ENCODE measurements at regions of chr16 and their contacts with region 1.

Region 1: GRCh38 chr16:48632137-48632774 is 22.3 kb upstream of the N4BP1 start:
- DNase-seq: no peak
- H3K4me3 Mint-ChIP-seq: no peak overlapping the region
- H3K27ac Mint-ChIP-seq: no peak overlapping the region
- H3K4me1 Mint-ChIP-seq: peaks cover 10% of the 10 kb centered on the region
- H3K27me3 Mint-ChIP-seq: peaks cover 2% of the 10 kb centered on the region

Region 2: DNA sequence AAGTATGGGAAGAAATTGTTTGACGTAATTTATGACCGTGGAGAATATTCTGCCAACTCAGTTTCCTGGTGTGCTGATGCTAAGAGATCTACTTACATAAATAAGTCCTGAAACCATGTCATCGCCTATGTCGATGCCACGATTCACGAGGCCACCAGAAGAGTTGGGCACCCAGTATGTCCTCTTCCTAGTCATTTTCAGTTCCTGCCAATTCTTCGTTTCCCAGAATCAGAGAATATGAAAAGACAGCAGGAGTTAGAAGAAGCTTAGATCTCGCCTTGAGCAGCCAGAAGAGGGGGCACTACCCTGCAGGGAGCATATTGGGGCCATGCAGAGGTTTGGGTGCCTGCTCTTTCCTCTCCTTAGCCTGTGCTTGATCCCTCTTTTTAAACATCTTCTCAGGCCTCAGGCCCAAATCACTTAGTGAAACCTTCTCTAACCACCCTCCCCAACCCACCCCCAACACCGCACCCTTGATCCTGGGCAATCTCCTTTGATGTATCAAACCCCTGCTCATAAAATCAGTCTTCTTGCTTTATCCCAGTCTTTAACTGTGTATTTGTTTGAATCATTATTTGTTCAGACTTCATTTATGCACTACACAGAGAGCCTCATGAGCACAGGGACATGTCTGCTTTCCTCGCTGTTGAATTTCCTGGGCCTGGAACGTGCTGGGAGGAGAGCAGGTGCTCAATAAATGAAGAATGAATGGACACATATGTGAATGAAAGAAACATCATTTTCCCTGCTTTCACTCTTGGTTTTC is 400.3 kb before region 1 on chr16:
- intact Hi-C with region 1: loop called (anchors 1 kb)
- DNase-seq: peak; percentile 28
- H3K4me3 Mint-ChIP-seq: no peak overlapping the region
- H3K27ac Mint-ChIP-seq: peak overlapping the region; percentile 58
- H3K4me1 Mint-ChIP-seq: peaks cover 21% of the 10 kb centered on the region
- H3K27me3 Mint-ChIP-seq: no peaks in the 10 kb centered on the region

Region 3: DNA sequence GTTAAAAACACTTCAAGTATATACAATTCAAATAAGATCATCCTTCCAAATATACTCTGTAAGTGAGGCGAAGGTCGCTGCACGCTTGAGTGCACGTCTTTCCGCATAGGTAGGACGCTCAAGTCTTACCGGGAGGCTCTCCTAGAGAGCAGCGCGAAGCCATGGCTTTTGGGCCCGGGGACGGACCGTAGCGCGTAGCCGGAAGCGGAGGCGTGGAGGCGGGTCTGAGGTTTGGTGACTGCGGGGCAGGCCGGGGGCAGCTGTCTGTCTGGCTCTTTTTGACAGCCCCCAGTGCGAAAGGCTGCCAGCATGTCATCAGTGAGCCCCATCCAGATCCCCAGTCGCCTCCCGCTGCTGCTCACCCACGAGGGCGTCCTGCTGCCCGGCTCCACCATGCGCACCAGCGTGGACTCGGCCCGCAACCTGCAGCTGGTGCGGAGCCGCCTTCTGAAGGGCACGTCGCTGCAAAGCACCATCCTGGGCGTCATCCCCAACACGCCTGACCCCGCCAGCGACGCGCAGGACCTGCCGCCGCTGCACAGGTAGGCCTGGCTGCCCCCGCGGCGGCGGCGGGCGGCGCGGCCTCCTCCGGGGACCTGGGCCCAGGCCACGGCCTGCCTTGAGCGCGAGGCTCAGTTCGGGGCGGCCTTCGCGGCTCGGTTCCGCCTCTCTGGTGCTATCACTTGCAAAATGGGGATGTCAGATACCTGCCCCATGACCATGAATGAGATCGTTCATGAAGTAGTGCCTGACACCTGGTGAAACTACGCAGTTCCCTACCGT is 388.0 kb before region 1 on chr16 and contains the start of gene LONP2:
- intact Hi-C with region 1: loop called (anchors 1 kb)
- DNase-seq: peak; percentile 89
- H3K4me3 Mint-ChIP-seq: peak within 1 kb of the TSS; percentile 92
- H3K27ac Mint-ChIP-seq: peak within 1 kb of the TSS; percentile 88
- H3K4me1 Mint-ChIP-seq: peaks cover 23% of the 10 kb centered on the region
- H3K27me3 Mint-ChIP-seq: no peaks in the 10 kb centered on the region
- total RNA-seq, gene LONP2: 49.7 and 54.2 TPM in 2 replicates

Region 4: GRCh38 chr16:48353565-48354163 is 278.6 kb before region 1 on chr16:
- intact Hi-C with region 1: loop called (anchors 1 kb)
- DNase-seq: peak; percentile 64
- H3K4me3 Mint-ChIP-seq: no peak overlapping the region
- H3K27ac Mint-ChIP-seq: peak overlapping the region; percentile 49
- H3K4me1 Mint-ChIP-seq: peaks cover 20% of the 10 kb centered on the region
- H3K27me3 Mint-ChIP-seq: no peaks in the 10 kb centered on the region

Region 5: GRCh38 chr16:48452977-48453760 is 179.1 kb before region 1 on chr16:
- intact Hi-C with region 1: loop called (anchors 1 kb)
- DNase-seq: no peak
- H3K4me3 Mint-ChIP-seq: no peak overlapping the region
- H3K27ac Mint-ChIP-seq: no peak overlapping the region
- H3K4me1 Mint-ChIP-seq: peaks cover 7% of the 10 kb centered on the region
- H3K27me3 Mint-ChIP-seq: peaks cover 19% of the 10 kb centered on the region

Region 6: GRCh38 chr16:48734220-48734859 is 102.1 kb after region 1 on chr16:
- intact Hi-C with region 1: no loop called
- DNase-seq: no peak
- H3K4me3 Mint-ChIP-seq: no peak overlapping the region
- H3K27ac Mint-ChIP-seq: no peak overlapping the region
- H3K4me1 Mint-ChIP-seq: no peaks in the 10 kb centered on the region
- H3K27me3 Mint-ChIP-seq: no peaks in the 10 kb centered on the region